ENCODE measurements at regions of chr1 and their contacts with region 1.

Region 1: DNA sequence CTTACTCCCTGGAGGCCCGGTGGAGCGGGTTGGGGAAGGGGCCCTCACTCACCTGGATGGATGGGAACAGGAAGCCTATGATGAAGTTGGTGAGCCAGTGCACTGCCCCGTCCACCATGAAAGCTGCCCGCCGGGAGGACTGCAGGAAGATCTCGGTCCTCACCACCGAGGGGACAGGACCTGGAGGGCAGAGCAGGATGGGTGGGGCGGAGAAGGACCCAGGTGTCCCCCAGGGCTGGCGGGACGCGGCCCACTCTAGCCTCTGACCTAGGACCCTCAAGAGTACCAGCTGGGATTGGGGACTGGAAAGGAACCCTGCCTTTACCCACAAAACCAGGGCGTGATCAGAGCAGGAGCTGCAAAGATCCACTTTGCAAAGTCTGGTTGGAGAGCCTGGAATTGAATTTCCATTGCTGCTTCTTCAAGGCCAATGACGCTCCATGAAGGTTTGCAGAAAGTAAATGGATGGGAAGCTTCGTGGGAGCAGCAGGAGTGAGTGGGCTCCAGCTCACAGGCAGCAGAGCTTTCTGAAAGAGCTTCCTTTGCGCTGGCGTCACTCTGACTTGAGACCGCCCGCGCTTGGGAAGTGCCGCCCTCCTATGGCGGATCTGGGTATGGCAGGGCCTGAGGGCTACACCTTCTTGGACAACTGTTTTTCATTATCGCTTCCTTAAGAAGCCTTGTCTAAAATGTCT is 21.4 kb downstream of the SLC2A7 start:
- DNase-seq: peak; percentile 94
- ATAC-seq: peak; percentile 97
- H3K4me3 Mint-ChIP-seq: peak overlapping the region; percentile 62
- H3K27ac Mint-ChIP-seq: peak overlapping the region; percentile 42
- H3K4me1 Mint-ChIP-seq: peaks cover 11% of the 10 kb centered on the region
- H3K27me3 Mint-ChIP-seq: no peaks in the 10 kb centered on the region
- CTCF ChIP-seq: peak; percentile 97

Region 2: DNA sequence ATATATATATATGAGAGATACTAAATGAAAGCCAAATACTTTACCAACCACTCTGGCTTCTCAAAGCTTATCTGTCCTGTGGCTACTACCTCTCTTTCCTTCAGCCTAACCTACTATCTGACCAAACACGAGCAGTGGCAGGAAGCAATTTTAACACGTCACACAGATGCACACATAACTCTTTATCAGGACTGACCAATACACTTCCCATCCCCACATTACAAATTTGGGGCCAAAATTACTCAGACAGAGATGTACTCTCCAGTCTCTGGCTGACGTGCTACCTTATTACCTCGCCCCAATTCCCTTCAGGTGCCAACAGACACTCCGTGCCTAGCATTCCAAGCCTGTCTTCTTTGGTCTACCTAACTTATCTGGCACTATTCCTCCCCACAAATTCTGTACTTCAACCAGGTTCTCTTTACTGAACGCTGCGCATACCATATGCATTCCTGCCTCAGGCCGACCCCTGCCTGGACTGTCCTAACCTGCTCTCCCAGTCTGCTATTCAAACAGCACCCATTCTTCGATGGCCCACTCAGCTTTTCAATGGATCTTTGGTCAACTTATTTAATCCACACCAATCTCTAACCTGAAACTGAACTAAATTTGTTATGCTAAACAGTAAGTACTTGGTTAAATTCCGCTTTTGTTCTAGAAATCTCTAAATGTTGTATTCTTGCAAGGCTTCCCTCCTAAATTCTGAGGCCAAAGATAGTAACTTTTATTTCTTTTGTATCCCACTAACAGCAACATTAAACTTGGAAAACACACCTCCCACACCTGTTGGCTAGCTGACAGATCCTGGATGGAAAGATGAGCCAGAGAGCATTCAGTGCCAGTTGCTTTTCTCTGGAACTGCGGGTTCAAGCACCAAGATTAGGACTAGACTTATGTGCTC is 215.3 kb before region 1 on chr1:
- CTCF ChIA-PET with region 1: no interaction called
- POLR2A ChIA-PET with region 1: no interaction called
- intact Hi-C with region 1: no loop called
- DNase-seq: no peak
- ATAC-seq: no peak
- H3K4me3 Mint-ChIP-seq: no peak overlapping the region
- H3K27ac Mint-ChIP-seq: no peak overlapping the region
- H3K4me1 Mint-ChIP-seq: peaks cover 3% of the 10 kb centered on the region
- H3K27me3 Mint-ChIP-seq: no peaks in the 10 kb centered on the region
- CTCF ChIP-seq: no peak

Region 3: GRCh38 chr1:8873506-8874229 is 131.2 kb before region 1 on chr1:
- CTCF ChIA-PET with region 1: interaction called, 13 read pairs
- POLR2A ChIA-PET with region 1: interaction called, 3 read pairs
- intact Hi-C with region 1: no loop called
- DNase-seq: peak; percentile 92
- ATAC-seq: peak; percentile 52
- H3K4me3 Mint-ChIP-seq: peak overlapping the region; percentile 88
- H3K27ac Mint-ChIP-seq: peak overlapping the region; percentile 100
- H3K4me1 Mint-ChIP-seq: peaks cover 62% of the 10 kb centered on the region
- H3K27me3 Mint-ChIP-seq: no peaks in the 10 kb centered on the region
- CTCF ChIP-seq: no peak

Region 4: GRCh38 chr1:8903908-8904650 is 100.8 kb before region 1 on chr1:
- CTCF ChIA-PET with region 1: interaction called, 12 read pairs
- POLR2A ChIA-PET with region 1: no interaction called
- intact Hi-C with region 1: no loop called
- DNase-seq: no peak
- ATAC-seq: no peak
- H3K4me3 Mint-ChIP-seq: no peak overlapping the region
- H3K27ac Mint-ChIP-seq: peak overlapping the region; percentile 68
- H3K4me1 Mint-ChIP-seq: peaks cover 57% of the 10 kb centered on the region
- H3K27me3 Mint-ChIP-seq: no peaks in the 10 kb centered on the region
- CTCF ChIP-seq: no peak

Region 5: GRCh38 chr1:8941906-8942305 is 62.9 kb before region 1 on chr1:
- CTCF ChIA-PET with region 1: interaction called, 19 read pairs
- POLR2A ChIA-PET with region 1: no interaction called
- intact Hi-C with region 1: no loop called
- DNase-seq: no peak
- ATAC-seq: peak; percentile 54
- H3K4me3 Mint-ChIP-seq: no peak overlapping the region
- H3K27ac Mint-ChIP-seq: peak overlapping the region; percentile 98
- H3K4me1 Mint-ChIP-seq: peaks cover 89% of the 10 kb centered on the region
- H3K27me3 Mint-ChIP-seq: no peaks in the 10 kb centered on the region
- CTCF ChIP-seq: no peak

Region 6: GRCh38 chr1:8987881-8988617 is 16.8 kb before region 1 on chr1:
- CTCF ChIA-PET with region 1: interaction called, 117 read pairs
- POLR2A ChIA-PET with region 1: interaction called, 5 read pairs
- intact Hi-C with region 1: no loop called
- DNase-seq: peak; percentile 78
- ATAC-seq: peak; percentile 74
- H3K4me3 Mint-ChIP-seq: peak overlapping the region; percentile 40
- H3K27ac Mint-ChIP-seq: peak overlapping the region; percentile 86
- H3K4me1 Mint-ChIP-seq: peaks cover 42% of the 10 kb centered on the region
- H3K27me3 Mint-ChIP-seq: no peaks in the 10 kb centered on the region
- CTCF ChIP-seq: peak; percentile 100

Region 7: DNA sequence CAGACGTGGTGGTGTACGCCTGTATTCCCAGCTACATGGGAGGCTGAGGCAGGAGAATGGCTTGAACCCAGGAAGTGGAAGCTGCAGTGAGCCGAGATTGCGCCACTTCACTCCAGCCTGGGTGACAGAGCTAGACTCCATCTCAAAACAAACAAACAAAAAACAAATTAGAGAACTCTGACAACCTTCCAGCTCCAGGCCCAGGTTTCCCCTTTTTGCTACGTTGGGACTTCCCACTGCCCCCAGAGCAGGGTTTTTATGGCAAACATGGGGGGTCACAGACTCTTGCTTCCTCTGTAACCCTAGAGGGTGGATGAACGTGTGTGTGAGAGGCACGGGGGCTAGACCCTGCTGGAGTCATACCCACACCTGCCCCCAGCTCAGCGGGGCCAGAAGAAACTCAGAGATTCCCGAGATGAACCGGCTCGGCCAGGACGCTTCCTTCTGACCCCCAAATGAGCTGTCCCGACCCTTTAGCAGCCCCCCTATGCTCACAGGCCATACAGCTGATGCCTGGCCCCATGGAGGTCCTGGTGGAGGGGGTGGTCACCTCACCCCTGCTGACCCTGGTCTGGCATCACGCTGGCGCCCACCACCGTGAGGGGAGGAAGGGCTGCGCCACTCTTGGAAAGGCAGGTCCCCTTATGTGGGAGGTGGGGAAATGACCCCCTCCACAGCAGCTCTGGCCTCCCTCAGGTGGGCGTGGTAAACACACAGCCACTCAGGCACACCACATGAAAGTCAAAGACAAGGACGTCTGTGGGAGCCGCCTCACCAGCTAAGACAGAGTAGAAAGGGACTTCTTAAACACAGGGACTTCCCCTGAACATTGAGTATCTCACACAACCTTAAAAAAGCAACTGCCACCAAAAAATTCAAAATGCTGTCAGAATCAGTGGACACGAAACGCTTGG is 116.9 kb after region 1 on chr1:
- CTCF ChIA-PET with region 1: interaction called, 12 read pairs
- POLR2A ChIA-PET with region 1: no interaction called
- intact Hi-C with region 1: no loop called
- DNase-seq: peak; percentile 79
- ATAC-seq: peak; percentile 97
- H3K4me3 Mint-ChIP-seq: peak overlapping the region; percentile 37
- H3K27ac Mint-ChIP-seq: no peak overlapping the region
- H3K4me1 Mint-ChIP-seq: peaks cover 31% of the 10 kb centered on the region
- H3K27me3 Mint-ChIP-seq: no peaks in the 10 kb centered on the region
- CTCF ChIP-seq: no peak

Region 8: GRCh38 chr1:9190234-9190633 is 185.4 kb after region 1 on chr1:
- CTCF ChIA-PET with region 1: no interaction called
- POLR2A ChIA-PET with region 1: no interaction called
- intact Hi-C with region 1: no loop called
- DNase-seq: no peak
- ATAC-seq: no peak
- H3K4me3 Mint-ChIP-seq: no peak overlapping the region
- H3K27ac Mint-ChIP-seq: no peak overlapping the region
- H3K4me1 Mint-ChIP-seq: no peaks in the 10 kb centered on the region
- H3K27me3 Mint-ChIP-seq: peaks cover 14% of the 10 kb centered on the region
- CTCF ChIP-seq: no peak

Region 9: DNA sequence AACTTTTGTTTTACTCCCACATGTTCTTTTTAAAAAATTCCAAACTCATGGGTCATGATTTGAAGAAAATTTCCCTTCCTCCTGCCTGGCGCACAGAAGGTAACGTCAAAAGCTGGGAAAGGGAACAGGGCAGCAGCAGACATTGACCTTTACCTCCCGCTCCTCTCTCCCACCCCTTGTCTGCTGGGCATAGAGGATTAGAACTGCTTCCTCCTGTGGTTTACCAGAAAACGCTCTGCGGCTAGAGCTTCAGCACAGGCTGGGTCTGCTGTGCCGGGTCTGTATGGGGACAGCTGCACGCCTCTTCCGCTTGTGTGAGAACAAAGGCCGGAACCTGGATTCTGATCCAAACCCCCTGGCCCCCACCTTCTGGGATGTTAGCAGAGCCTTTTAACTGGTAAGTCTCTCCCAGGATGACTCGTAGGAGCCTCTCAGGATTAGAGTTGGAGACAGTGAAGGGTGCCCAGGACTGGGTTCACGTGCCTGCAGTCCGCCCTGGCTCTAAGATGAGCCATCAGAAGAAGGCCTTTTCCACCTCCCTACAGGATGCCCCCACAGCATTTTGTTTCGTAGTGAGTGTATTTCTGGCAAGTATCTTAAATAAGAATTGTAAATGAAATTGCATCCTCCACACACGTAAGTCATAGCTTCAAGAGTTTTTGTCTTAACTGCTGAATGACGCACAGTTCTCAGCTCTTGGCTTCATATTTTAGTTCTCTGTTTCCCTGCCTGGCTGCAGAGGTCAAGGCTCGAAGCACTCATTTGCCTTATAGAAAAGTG is 235.0 kb after region 1 on chr1:
- CTCF ChIA-PET with region 1: no interaction called
- POLR2A ChIA-PET with region 1: no interaction called
- intact Hi-C with region 1: no loop called
- DNase-seq: peak; percentile 84
- ATAC-seq: peak; percentile 71
- H3K4me3 Mint-ChIP-seq: peak overlapping the region; percentile 44
- H3K27ac Mint-ChIP-seq: peak overlapping the region; percentile 76
- H3K4me1 Mint-ChIP-seq: peaks cover 50% of the 10 kb centered on the region
- H3K27me3 Mint-ChIP-seq: no peaks in the 10 kb centered on the region
- CTCF ChIP-seq: no peak

Measured in activated CD8-positive, alpha-beta T cell treated with anti-CD3 and anti-CD28 coated beads for 36 hours (primary cell).